ENCODE measurements at regions of chr6 and their contacts with region 1.

Region 1: GRCh38 chr6:132643547-132643946 is 15.4 kb downstream of the TAAR1 start:
- DNase-seq: no peak
- ATAC-seq: no peak
- H3K4me3 ChIP-seq: no peak overlapping the region
- H3K27ac ChIP-seq: no peak overlapping the region
- H3K4me1 ChIP-seq: no peaks in the 10 kb centered on the region
- H3K27me3 ChIP-seq: no peaks in the 10 kb centered on the region
- CTCF ChIP-seq: no peak
- EP300 ChIP-seq: no peak
- POLR2A ChIP-seq: no peak
- RAD21 ChIP-seq: no peak

Region 2: DNA sequence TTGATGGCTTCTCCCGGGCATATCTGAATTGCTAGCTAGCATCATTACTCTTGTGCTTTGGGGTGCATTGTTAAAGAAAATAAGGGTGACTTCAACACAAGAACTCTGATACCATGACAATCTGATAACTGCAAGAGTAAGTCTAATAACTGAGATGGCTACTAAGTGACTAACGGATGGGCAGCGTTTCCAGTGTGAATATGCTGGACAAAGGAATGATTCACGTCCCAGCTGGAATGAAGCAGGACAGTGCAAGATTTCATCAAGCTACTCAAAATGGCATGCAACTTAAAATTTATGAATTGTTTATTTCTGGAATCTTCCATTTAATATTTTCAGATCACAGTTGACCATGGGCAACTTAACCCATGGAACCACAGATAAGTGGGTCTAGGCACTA is 274.0 kb before region 1 on chr6:
- CTCF ChIA-PET with region 1: no interaction called
- POLR2A ChIA-PET with region 1: no interaction called
- in situ Hi-C with region 1: no loop called
- intact Hi-C with region 1: no loop called
- DNase-seq: no peak
- ATAC-seq: no peak
- H3K4me3 ChIP-seq: no peak overlapping the region
- H3K27ac ChIP-seq: no peak overlapping the region
- H3K4me1 ChIP-seq: no peaks in the 10 kb centered on the region
- H3K27me3 ChIP-seq: no peaks in the 10 kb centered on the region; a peak in 1 of 5 replicates
- CTCF ChIP-seq: no peak
- EP300 ChIP-seq: no peak
- POLR2A ChIP-seq: no peak
- RAD21 ChIP-seq: no peak

Region 3: GRCh38 chr6:132598473-132598872 is 45.1 kb before region 1 on chr6:
- CTCF ChIA-PET with region 1: no interaction called
- POLR2A ChIA-PET with region 1: no interaction called
- in situ Hi-C with region 1: no loop called
- intact Hi-C with region 1: loop called (anchors 5 kb)
- DNase-seq: peak; percentile 57
- ATAC-seq: peak; percentile 100
- H3K4me3 ChIP-seq: no peak overlapping the region
- H3K27ac ChIP-seq: no peak overlapping the region
- H3K4me1 ChIP-seq: no peaks in the 10 kb centered on the region
- H3K27me3 ChIP-seq: no peaks in the 10 kb centered on the region; a peak in 1 of 5 replicates
- CTCF ChIP-seq: peak; percentile 56
- EP300 ChIP-seq: no peak
- POLR2A ChIP-seq: no peak
- RAD21 ChIP-seq: no peak

Measured in HepG2 (cell line).